Mammary epithelial cell (primary cell): ENCODE measurements at regions of chr5 and their contacts with region 1.

Region 1: DNA sequence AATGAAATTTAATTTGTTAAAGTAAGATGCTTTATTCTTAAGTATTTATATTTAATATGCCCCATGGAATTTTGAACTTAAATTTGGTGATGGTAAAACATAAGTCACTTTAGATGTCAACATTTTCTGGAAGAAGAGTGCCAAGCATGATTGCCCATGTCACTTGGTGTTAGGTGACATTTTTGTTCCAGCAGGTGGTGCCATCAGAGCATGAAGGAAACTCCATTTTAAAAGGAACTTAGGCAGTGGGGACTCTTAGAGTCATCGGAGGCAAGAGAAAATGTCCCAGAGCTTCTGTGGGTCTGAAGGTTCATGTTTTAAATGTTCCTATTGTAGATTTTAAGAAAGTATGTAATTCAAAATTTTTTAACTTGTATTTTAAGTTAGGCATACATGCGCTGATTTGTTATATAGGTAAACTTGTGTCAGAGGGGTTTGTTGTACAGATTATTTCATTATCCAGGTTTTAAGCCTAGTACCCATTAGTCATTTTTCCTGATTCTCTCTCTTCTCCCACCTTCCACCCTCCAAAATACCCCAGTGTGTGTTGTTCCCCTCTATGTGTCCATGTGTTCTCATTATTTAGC is 789.3 kb downstream of the SEMA5A start:
- DNase-seq: peak; percentile 28
- H3K4me3 ChIP-seq: no peak overlapping the region
- H3K27ac ChIP-seq: no peak overlapping the region
- H3K4me1 ChIP-seq: no peaks in the 10 kb centered on the region
- H3K27me3 ChIP-seq: no peaks in the 10 kb centered on the region
- CTCF ChIP-seq: peak; percentile 57 to 80

Region 2: GRCh38 chr5:8842971-8843551 is 86.5 kb after region 1 on chr5:
- CTCF ChIA-PET with region 1: interaction called, 3 read pairs
- dilution Hi-C with region 1: no loop called
- in situ Hi-C with region 1: no loop called
- intact Hi-C with region 1: loop called (anchors 1 kb)
- DNase-seq: peak; percentile 21
- H3K4me3 ChIP-seq: no peak overlapping the region
- H3K27ac ChIP-seq: no peak overlapping the region
- H3K4me1 ChIP-seq: peaks cover 5% of the 10 kb centered on the region
- H3K27me3 ChIP-seq: no peaks in the 10 kb centered on the region
- CTCF ChIP-seq: peak; percentile 41 to 78

Region 3: GRCh38 chr5:8864053-8864452 is 107.5 kb after region 1 on chr5:
- CTCF ChIA-PET with region 1: no interaction called
- dilution Hi-C with region 1: no loop called
- in situ Hi-C with region 1: no loop called
- intact Hi-C with region 1: loop called (anchors 5 kb)
- DNase-seq: peak; percentile 40
- H3K4me3 ChIP-seq: no peak overlapping the region
- H3K27ac ChIP-seq: no peak overlapping the region
- H3K4me1 ChIP-seq: peaks cover 4% of the 10 kb centered on the region
- H3K27me3 ChIP-seq: no peaks in the 10 kb centered on the region
- CTCF ChIP-seq: peak; percentile 70 to 82

Region 4: DNA sequence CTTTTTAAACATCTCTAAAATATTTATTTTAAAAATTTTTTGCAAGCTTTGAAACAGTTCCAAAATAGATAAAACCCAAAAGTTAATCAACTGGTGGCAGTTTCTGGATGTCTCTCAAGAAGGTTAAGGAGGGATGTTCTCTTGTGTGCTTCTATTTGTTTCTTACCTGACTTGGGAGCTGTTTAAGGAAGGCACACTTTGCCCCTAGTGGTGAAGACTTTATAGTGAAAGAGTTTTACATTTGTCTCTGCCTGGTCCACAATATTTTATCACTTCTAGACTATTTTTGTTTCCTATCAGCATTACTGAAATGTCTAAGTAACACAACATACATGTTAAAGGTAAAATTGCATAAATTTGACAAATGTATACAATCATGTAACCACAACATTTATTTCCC is 236.4 kb after region 1 on chr5:
- CTCF ChIA-PET with region 1: no interaction called
- dilution Hi-C with region 1: no loop called
- in situ Hi-C with region 1: no loop called
- intact Hi-C with region 1: loop called (anchors 5 kb)
- DNase-seq: peak; percentile 19
- H3K4me3 ChIP-seq: no peak overlapping the region
- H3K27ac ChIP-seq: no peak overlapping the region
- H3K4me1 ChIP-seq: peaks cover 16% of the 10 kb centered on the region
- H3K27me3 ChIP-seq: no peaks in the 10 kb centered on the region
- CTCF ChIP-seq: peak; percentile 59 to 61

Region 5: GRCh38 chr5:9059920-9060691 is 303.5 kb after region 1 on chr5:
- CTCF ChIA-PET with region 1: no interaction called
- dilution Hi-C with region 1: no loop called
- in situ Hi-C with region 1: no loop called
- intact Hi-C with region 1: loop called (anchors 2 kb)
- DNase-seq: peak; percentile 97
- H3K4me3 ChIP-seq: no peak overlapping the region
- H3K27ac ChIP-seq: peak overlapping the region; percentile 87
- H3K4me1 ChIP-seq: peaks cover 44% of the 10 kb centered on the region
- H3K27me3 ChIP-seq: no peaks in the 10 kb centered on the region
- CTCF ChIP-seq: no peak

Region 6: DNA sequence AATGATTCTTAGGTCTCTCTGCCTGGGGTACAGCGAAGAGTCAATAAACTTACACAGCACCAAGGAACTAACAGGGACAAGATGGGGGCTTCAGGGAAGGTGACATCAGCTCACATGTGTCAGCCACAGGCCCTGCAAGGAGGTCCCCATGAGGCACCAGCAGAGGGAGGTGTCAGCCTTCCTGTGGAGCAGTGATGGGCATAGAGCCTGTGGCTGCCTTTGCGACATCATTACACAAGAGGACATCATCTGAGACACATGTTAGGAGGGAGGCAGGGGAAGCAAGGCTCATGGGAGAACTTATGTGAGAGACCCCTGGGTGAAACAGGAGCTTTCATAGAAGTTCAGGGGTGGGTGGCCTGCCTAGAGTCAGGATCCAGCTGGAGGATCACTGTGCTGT is 399.7 kb after region 1 on chr5:
- CTCF ChIA-PET with region 1: no interaction called
- dilution Hi-C with region 1: no loop called
- in situ Hi-C with region 1: no loop called
- intact Hi-C with region 1: loop called (anchors 2 kb)
- DNase-seq: peak; percentile 46
- H3K4me3 ChIP-seq: no peak overlapping the region
- H3K27ac ChIP-seq: no peak overlapping the region
- H3K4me1 ChIP-seq: no peaks in the 10 kb centered on the region
- H3K27me3 ChIP-seq: no peaks in the 10 kb centered on the region
- CTCF ChIP-seq: peak; percentile 62 to 81

Region 7: DNA sequence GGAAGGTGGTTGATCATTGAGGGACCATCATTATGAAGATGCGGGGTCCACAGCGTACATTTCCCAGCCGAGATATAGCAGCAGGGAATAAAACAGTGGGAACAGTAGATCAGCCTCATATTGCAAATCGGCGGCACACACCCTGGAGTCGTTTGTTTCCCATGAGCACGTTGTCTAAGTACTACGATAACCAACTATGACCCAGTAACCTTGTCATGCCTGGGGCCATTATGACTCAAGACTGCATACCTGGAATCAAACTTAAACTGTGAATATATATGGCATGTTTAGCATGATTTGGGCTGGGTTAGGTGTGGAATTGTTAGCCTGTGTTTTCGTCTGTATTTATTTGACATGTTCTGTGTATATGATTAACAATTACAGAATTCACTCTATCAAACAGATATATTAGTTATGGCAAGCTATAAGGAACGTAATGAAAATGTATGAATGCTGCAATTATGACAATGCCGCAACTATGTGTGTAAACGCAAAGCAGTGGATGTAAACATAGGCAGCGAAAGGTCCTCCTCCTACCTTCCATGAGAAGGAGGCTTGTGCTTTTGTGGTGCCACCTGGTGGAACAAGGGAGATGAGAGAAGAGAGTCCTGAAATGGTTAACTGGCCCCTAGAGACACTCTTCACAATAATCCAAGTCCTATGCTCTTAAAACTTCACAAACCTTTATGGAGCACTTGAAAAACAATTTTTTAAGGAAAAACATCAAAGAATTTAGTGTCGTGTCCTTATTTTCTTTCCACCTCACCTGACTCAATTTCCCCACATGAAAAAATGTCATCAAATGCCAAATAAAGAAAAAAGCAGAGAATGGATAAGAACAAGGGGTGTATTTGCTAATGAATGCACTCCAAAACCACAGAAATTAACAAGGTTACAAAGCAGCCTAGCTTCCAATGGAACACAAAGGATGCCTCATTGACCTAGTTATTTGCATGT is 742.2 kb after region 1 on chr5:
- CTCF ChIA-PET with region 1: no interaction called
- dilution Hi-C with region 1: no loop called
- in situ Hi-C with region 1: no loop called
- intact Hi-C with region 1: loop called (anchors 1 kb)
- DNase-seq: peak; percentile 47
- H3K4me3 ChIP-seq: no peak overlapping the region
- H3K27ac ChIP-seq: no peak overlapping the region
- H3K4me1 ChIP-seq: no peaks in the 10 kb centered on the region
- H3K27me3 ChIP-seq: no peaks in the 10 kb centered on the region
- CTCF ChIP-seq: peak; percentile 52 to 80